ENCODE measurements at regions of chr7 and their contacts with region 1.

Region 1: DNA sequence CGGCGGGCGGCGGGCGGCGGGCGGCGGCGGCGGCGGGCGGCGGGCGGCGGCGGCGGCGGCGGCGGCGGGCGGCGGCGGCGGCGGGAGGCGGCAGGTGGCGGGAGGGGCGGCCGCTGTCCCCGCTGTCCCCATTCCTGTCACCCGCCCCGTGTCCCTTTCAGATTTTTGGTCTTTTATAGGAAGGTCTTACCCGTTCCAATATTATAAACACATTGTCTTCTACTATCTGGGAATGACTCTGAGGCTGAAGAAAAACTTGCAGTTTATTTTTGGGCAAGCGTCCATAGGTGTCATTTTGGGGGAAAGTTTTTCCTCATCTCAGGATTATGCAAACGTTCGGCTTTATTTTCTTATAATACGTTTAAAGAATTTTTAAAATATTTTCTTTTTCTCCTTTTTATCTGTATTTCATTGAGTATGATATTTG is 578 bp downstream of the ZNF713 start:
- DNase-seq: peak in 1 of 2 donors; percentile 10
- ATAC-seq: no peak
- H3K4me3 ChIP-seq: peak overlapping the region; percentile 65
- H3K27ac ChIP-seq: peak overlapping the region; percentile 65
- H3K4me1 ChIP-seq: no peaks in the 10 kb centered on the region
- H3K27me3 ChIP-seq: peaks cover 0 to 2% (median 0%) of the 10 kb centered on the region in 3 donors
- CTCF ChIP-seq: no peak

Region 2: GRCh38 chr7:54758702-54759592 is 1128.9 kb before region 1 on chr7 and contains the start of gene SEC61G:
- intact Hi-C with region 1: loop called in 1 of 2 experiments (anchors 10 kb)
- DNase-seq: peak; percentile 97 to 99
- ATAC-seq: peak; percentile 97 to 99 (median 98)
- H3K4me3 ChIP-seq: peak within 1 kb of the TSS; percentile 99
- H3K27ac ChIP-seq: peak within 1 kb of the TSS; percentile 95
- H3K4me1 ChIP-seq: peaks cover 22% of the 10 kb centered on the region
- H3K27me3 ChIP-seq: no peaks in the 10 kb centered on the region
- CTCF ChIP-seq: no peak
- total RNA-seq, gene SEC61G: 44.1 to 67.8 (median 56.4) TPM

Region 3: DNA sequence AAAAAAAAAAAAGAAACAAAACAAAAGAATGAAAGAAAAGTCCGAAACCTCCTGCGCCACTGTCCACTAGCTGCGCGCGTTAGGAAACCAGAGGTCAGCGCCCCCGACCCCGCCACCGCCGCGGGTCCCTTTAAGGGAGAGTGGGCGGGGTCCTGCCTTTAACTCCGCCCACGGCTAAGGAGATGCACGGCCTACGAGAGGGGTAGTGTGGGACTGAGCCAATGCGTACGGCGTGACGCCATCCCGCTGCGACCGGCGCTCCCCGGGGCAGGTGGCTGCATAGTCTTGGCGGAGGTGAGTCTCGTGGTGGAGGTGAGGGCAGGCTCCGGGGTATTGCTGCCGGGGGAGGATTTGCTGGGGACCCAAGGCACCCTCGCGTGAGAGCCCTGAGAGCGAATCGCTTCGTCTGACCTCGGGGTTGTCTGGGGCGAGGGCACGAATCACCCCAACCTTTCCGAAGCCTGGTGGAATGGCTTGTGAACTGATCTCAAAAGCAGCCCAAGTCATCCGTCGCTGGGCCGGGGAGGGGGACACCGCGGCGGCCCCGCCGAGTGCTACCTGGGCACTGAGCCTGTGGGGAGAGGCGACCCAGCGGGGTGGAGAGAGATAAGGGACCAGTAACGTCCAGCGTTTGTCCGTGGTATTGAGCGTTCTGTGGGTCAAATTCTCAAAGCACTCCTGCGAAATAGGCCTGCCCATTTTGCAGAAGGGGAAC is 64.0 kb after region 1 on chr7 and contains the start of gene MRPS17:
- intact Hi-C with region 1: loop called (anchors 2 to 5 kb)
- DNase-seq: peak; percentile 91 to 95
- ATAC-seq: peak; percentile 100
- H3K4me3 ChIP-seq: peak within 1 kb of the TSS; percentile 99
- H3K27ac ChIP-seq: peak within 1 kb of the TSS; percentile 94
- H3K4me1 ChIP-seq: peaks cover 7% of the 10 kb centered on the region
- H3K27me3 ChIP-seq: no peaks in the 10 kb centered on the region
- CTCF ChIP-seq: no peak
- total RNA-seq, gene MRPS17: 23.8 to 34.6 (median 26.5) TPM

Measured in psoas muscle (tissue), 8 donors.